ENCODE measurements at regions of chr12 and their contacts with region 1.

Region 1: GRCh38 chr12:103632554-103633216 is 45.6 kb downstream of the STAB2 start:
- DNase-seq: peak; percentile 93
- ATAC-seq: peak; percentile 99
- H3K4me3 Mint-ChIP-seq: no peak overlapping the region
- H3K27ac Mint-ChIP-seq: no peak overlapping the region
- H3K4me1 Mint-ChIP-seq: no peaks in the 10 kb centered on the region
- H3K27me3 Mint-ChIP-seq: no peaks in the 10 kb centered on the region
- CTCF ChIP-seq: peak; percentile 99

Region 2: GRCh38 chr12:103368165-103368564 is 264.5 kb before region 1 on chr12:
- CTCF ChIA-PET with region 1: no interaction called
- POLR2A ChIA-PET with region 1: no interaction called
- DNase-seq: no peak
- ATAC-seq: no peak
- H3K4me3 Mint-ChIP-seq: no peak overlapping the region
- H3K27ac Mint-ChIP-seq: no peak overlapping the region
- H3K4me1 Mint-ChIP-seq: no peaks in the 10 kb centered on the region
- H3K27me3 Mint-ChIP-seq: no peaks in the 10 kb centered on the region
- CTCF ChIP-seq: no peak

Region 3: DNA sequence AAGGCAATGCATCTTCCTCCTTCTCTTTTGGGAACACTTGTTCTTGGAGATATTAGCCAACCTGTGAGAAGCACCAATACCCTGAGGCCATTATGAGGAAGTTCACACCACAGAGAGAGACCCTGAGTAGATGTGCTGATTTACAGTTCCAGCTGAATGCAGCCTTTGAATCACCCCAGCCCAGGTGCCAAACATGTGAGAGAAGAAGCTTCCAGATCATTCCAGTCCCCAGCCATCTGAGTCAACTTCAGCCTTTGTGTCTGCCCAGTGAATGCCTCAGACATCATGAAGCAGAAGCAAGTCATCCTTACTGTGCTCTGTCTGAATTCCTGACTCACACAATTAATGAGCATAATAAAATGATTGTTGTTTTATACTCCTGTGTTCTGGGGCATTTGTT is 162.0 kb before region 1 on chr12:
- CTCF ChIA-PET with region 1: no interaction called
- POLR2A ChIA-PET with region 1: no interaction called
- DNase-seq: no peak
- ATAC-seq: no peak
- H3K4me3 Mint-ChIP-seq: no peak overlapping the region
- H3K27ac Mint-ChIP-seq: no peak overlapping the region
- H3K4me1 Mint-ChIP-seq: peaks cover 26% of the 10 kb centered on the region
- H3K27me3 Mint-ChIP-seq: peaks cover 5% of the 10 kb centered on the region
- CTCF ChIP-seq: no peak

Region 4: DNA sequence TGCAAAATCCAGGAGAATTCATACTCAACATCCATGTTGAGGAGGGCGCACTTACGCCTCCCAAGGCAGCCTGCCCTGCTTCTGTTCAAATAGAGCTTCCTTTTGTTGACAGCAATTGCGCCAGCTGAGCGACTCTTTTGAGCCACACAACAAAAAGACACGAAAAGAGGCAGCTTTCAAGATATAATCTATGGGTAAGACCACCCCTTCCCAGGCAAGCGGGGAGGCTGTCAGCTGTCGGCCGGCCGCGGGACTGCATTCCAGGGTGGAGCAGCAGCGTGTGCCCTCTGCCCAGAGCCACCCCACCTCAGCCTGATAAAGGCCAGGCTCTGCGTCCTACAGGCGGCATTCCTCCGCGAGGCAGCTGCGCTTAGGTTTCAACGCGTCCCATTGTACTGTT is 61.4 kb before region 1 on chr12:
- CTCF ChIA-PET with region 1: interaction called, 49 read pairs
- POLR2A ChIA-PET with region 1: no interaction called
- DNase-seq: peak; percentile 73
- ATAC-seq: peak; percentile 90
- H3K4me3 Mint-ChIP-seq: peak overlapping the region; percentile 36
- H3K27ac Mint-ChIP-seq: no peak overlapping the region
- H3K4me1 Mint-ChIP-seq: peaks cover 25% of the 10 kb centered on the region
- H3K27me3 Mint-ChIP-seq: peaks cover 6% of the 10 kb centered on the region; the same call in 1 of the 2 replicates
- CTCF ChIP-seq: no peak

Region 5: DNA sequence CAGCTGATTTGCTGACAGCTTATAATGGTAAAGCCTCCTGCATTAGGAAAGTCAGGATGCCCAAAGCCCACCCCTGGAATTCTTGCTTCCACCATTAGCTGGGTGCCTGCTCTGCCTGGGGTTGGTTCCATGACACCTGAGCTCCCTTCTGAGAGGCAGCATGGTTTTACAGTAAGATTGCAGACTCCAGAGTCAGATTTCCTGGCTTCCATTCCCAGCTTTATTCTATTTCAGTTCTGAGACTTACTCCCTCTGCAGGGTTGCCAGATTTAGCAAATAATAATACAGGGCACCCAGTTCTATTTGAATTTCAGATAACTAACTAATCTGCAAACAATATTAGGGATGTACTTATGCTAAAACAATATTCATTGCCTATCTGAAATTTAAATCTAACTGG is 33.4 kb before region 1 on chr12:
- CTCF ChIA-PET with region 1: interaction called, 15 read pairs
- POLR2A ChIA-PET with region 1: no interaction called
- DNase-seq: no peak
- ATAC-seq: no peak
- H3K4me3 Mint-ChIP-seq: no peak overlapping the region
- H3K27ac Mint-ChIP-seq: no peak overlapping the region
- H3K4me1 Mint-ChIP-seq: no peaks in the 10 kb centered on the region
- H3K27me3 Mint-ChIP-seq: no peaks in the 10 kb centered on the region; the same call in 1 of the 2 replicates
- CTCF ChIP-seq: no peak

Region 6: GRCh38 chr12:103657331-103657730 is 24.6 kb after region 1 on chr12:
- CTCF ChIA-PET with region 1: interaction called, 14 read pairs
- POLR2A ChIA-PET with region 1: no interaction called
- DNase-seq: no peak
- ATAC-seq: no peak
- H3K4me3 Mint-ChIP-seq: no peak overlapping the region
- H3K27ac Mint-ChIP-seq: no peak overlapping the region
- H3K4me1 Mint-ChIP-seq: peaks cover 20% of the 10 kb centered on the region
- H3K27me3 Mint-ChIP-seq: peaks cover 3% of the 10 kb centered on the region; the same call in 1 of the 2 replicates
- CTCF ChIP-seq: no peak

Region 7: DNA sequence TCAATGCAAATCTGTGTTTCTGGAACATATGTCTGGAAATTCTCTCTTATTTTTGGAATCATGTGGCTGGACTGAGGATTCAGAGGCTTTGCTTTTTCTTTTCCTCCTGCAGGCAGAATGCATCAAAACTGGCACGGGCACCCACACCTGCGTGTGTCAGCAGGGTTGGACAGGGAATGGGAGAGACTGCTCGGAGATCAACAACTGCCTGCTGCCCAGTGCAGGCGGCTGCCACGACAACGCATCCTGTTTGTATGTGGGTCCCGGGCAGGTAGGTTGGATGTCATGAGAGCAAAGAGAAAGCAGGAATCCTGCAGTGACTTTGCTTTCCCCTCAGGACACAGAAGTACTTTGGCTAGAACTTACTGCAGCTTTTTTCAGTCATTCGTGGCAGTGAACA is 44.7 kb after region 1 on chr12:
- CTCF ChIA-PET with region 1: interaction called, 21 read pairs
- POLR2A ChIA-PET with region 1: no interaction called
- DNase-seq: peak; percentile 16
- ATAC-seq: peak; percentile 71
- H3K4me3 Mint-ChIP-seq: no peak overlapping the region
- H3K27ac Mint-ChIP-seq: no peak overlapping the region
- H3K4me1 Mint-ChIP-seq: peaks cover 22% of the 10 kb centered on the region
- H3K27me3 Mint-ChIP-seq: no peaks in the 10 kb centered on the region
- CTCF ChIP-seq: no peak

Region 8: DNA sequence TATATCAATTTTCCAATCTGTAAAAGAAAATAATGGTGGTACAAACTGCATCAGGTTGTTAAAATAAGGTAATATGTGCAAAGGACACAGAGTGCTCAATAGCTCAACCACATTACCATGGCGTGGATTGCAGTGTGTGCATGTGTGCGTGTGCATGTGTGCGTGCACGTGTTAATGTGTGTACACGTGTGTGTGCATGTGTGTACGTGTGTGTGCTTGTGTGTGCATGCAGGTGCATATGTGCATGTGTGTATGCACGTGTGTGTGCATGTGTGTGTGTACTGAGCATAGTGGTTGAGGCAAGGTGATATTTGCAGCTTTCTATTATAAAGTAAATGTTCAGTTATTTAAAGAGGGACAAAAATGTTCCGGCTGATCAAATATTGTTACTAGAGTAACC is 92.7 kb after region 1 on chr12:
- CTCF ChIA-PET with region 1: interaction called, 14 read pairs
- POLR2A ChIA-PET with region 1: no interaction called
- DNase-seq: no peak
- ATAC-seq: no peak
- H3K4me3 Mint-ChIP-seq: no peak overlapping the region
- H3K27ac Mint-ChIP-seq: no peak overlapping the region
- H3K4me1 Mint-ChIP-seq: no peaks in the 10 kb centered on the region
- H3K27me3 Mint-ChIP-seq: no peaks in the 10 kb centered on the region; the same call in 1 of the 2 replicates
- CTCF ChIP-seq: no peak